HAP-1 (cell line): ENCODE measurements at regions of chr16 and their contacts with region 1.

Region 1: GRCh38 chr16:1983544-1984346 is at the start of gene GFER:
- DNase-seq: peak; percentile 86 to 94
- H3K4me3 ChIP-seq: peak within 1 kb of the TSS; percentile 72
- H3K4me1 ChIP-seq: peaks cover 6% of the 10 kb centered on the region
- H3K27me3 ChIP-seq: peaks cover 12% of the 10 kb centered on the region

Region 2: DNA sequence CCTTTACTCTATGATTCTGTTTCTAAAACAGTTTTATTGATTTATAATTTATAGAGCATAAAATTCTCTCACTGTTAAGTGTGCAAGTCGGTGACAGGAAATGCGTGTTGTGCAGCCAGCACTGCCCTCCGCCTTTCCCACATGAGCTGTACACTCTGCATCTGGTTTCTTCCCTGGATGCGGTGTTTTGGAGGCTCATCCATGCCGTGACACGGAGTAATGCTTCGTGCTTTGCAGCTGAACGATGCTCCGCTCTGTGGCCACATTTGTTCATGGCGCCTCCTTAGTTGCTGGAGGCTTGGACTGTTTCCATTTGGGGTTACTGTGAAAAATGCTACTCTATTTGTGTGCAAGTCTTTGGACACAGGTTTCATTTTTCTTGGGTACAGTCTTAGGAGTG is 183.0 kb before region 1 on chr16:
- in situ Hi-C with region 1: no loop called
- DNase-seq: no peak
- H3K4me3 ChIP-seq: no peak overlapping the region
- H3K4me1 ChIP-seq: no peaks in the 10 kb centered on the region
- H3K27me3 ChIP-seq: no peaks in the 10 kb centered on the region

Region 3: GRCh38 chr16:2047330-2048115 is 63.8 kb after region 1 on chr16 and contains the starts of genes NTHL1 and TSC2:
- in situ Hi-C with region 1: no loop called
- DNase-seq: peak; percentile 94 to 97
- H3K4me3 ChIP-seq: peak within 1 kb of the TSS; percentile 70
- H3K4me1 ChIP-seq: peaks cover 10% of the 10 kb centered on the region
- H3K27me3 ChIP-seq: no peaks in the 10 kb centered on the region

Region 4: DNA sequence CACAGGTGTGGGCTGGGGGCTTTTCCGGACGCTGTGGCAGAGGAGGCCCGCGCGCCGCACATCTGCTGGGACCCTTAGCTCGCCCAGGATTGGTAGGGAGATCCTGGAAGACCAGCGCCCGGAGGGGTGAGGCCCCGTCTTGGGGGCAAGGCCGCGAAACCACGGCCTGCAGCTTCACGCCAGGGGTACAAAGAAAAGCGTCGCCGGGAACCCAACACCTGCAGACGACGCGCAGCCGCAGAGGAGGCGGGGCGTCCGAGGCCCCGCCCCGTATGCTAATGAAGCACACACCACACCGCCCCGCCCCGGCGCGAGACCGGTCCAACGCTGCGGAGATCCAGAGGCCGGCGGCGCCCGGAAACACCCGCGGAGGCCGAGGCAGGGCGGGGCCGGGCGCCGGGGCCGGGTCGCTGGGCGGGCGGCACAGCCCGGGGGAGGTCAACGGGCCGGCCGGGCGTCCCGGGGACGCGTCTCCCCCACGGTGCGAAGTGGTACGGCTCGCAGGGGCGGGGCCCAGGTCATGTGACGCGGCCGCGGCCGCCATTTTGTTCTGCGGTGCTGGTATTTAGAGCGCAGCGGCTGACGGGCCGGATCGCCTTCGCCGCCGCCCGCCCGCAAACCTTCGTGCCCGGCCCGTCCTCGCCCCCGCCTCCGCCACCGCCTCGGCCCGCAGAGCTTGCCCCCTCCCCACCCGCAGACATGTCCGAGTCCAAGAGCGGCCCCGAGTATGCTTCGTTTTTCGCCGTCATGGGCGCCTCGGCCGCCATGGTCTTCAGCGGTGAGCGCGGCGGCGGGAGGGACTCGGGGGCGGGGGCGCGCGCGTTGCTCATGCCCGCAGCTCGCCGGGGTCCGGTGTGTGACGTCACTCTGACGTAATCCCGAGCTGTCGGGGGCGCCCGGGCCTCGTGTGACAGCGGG is 529.9 kb after region 1 on chr16 and contains the start of gene ATP6V0C:
- in situ Hi-C with region 1: loop called (anchors 25 kb)
- DNase-seq: peak; percentile 81 to 95
- H3K4me3 ChIP-seq: peak within 1 kb of the TSS; percentile 89
- H3K4me1 ChIP-seq: peaks cover 5% of the 10 kb centered on the region
- H3K27me3 ChIP-seq: no peaks in the 10 kb centered on the region